ENCODE measurements at regions of chrX and their contacts with region 1.

Region 1: GRCh38 chrX:131626681-131627296 is 82.9 kb downstream of the OR13H1 start:
- DNase-seq: peak; percentile 1
- ATAC-seq: peak; percentile 60; the same call in 1 of the 2 replicates
- H3K4me3 ChIP-seq: no peak overlapping the region
- H3K27ac ChIP-seq: no peak overlapping the region
- H3K4me1 ChIP-seq: no peaks in the 10 kb centered on the region
- H3K27me3 ChIP-seq: no peaks in the 10 kb centered on the region
- CTCF ChIP-seq: peak; percentile 28 to 55 (median 48); a peak in 4 of 6 replicates
- POLR2A ChIP-seq: no peak
- RAD21 ChIP-seq: peak; percentile 78

Region 2: GRCh38 chrX:131493113-131493512 is 133.7 kb before region 1 on chrX:
- CTCF ChIA-PET with region 1: no interaction called
- POLR2A ChIA-PET with region 1: no interaction called
- RAD21 ChIA-PET with region 1: no interaction called
- intact Hi-C with region 1: loop called (anchors 10 kb)
- DNase-seq: no peak
- ATAC-seq: no peak
- H3K4me3 ChIP-seq: no peak overlapping the region
- H3K27ac ChIP-seq: no peak overlapping the region
- H3K4me1 ChIP-seq: no peaks in the 10 kb centered on the region
- H3K27me3 ChIP-seq: no peaks in the 10 kb centered on the region
- CTCF ChIP-seq: no peak
- POLR2A ChIP-seq: no peak
- RAD21 ChIP-seq: no peak

Region 3: GRCh38 chrX:132226169-132226568 is 599.4 kb after region 1 on chrX:
- CTCF ChIA-PET with region 1: no interaction called
- POLR2A ChIA-PET with region 1: no interaction called
- RAD21 ChIA-PET with region 1: no interaction called
- intact Hi-C with region 1: no loop called
- DNase-seq: no peak
- ATAC-seq: no peak
- H3K4me3 ChIP-seq: no peak overlapping the region
- H3K27ac ChIP-seq: no peak overlapping the region
- H3K4me1 ChIP-seq: peaks cover 0 to 4% of the 10 kb centered on the region in 2 experiments; a peak in 1 of 4 replicates
- H3K27me3 ChIP-seq: no peaks in the 10 kb centered on the region
- CTCF ChIP-seq: peak; percentile 20 to 29 (median 27); a peak in 3 of 6 replicates
- POLR2A ChIP-seq: no peak
- RAD21 ChIP-seq: peak; percentile 54